ENCODE measurements at regions of chr7 and their contacts with region 1.

Region 1: DNA sequence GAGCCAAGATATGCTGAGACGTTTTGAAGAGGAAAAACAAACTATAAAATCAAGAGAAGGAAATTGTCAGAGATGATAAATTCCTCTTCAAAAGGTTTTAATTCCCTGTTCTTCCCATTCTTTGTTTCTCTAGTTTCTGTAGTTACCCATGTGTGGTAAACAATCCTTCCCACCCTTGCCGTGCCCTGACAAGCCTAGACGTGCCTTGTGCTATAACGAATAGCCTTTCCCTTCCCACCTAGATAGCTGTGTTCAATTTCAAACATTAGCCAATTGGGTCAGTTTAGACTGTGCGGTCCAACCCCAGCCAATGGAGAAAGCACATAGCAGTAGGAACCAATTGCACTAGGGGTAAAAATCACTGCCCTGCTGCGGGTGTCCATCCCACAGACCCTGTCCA is 138.1 kb downstream of the RALA start:
- DNase-seq: no peak
- H3K4me3 ChIP-seq: no peak overlapping the region
- H3K27me3 ChIP-seq: no peaks in the 10 kb centered on the region
- CTCF ChIP-seq: no peak

Region 2: DNA sequence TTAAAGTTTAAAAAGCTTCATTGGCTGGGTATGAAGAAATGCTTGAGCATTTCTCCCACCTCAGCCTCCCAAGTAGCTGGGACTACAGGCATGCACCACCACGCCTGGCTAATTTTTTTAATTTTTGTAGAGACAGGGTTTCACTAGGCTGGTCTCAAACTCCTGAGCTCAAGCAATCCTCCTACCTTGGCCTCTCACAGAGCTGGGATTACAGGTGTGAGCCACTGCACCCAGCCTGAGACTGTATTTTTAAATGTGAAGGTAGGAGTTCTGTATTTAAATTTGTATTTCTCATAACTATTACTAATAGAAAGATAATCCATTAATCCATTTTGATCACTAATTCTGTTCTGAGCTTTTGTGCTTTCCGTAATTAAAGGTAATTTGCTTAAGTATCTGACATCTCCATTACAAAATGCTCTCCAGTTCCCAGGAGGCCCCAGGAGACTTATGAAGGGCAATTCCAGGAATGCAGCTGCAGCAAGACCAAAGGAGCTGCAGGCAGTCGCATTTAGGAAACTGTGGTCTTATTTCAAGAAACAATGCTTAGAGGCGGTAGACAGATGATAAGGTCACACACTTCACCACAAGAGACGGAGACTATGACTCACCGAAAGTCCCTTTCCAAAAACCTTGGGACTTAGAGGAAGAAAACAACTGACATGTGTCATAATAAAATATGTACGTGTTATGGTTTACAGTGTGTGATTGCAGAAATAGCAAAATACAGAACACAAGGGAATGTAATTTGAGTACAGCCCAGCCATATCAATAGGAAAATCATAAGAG is 171.9 kb before region 1 on chr7:
- CTCF ChIA-PET with region 1: no interaction called
- POLR2A ChIA-PET with region 1: interaction called, 17 read pairs
- DNase-seq: peak; percentile 70
- H3K4me3 ChIP-seq: no peak overlapping the region
- H3K27me3 ChIP-seq: no peaks in the 10 kb centered on the region
- CTCF ChIP-seq: no peak